Head of caudate nucleus (tissue), 42 donors: ENCODE measurements at regions of chr1 and their contacts with region 1.

Region 1: DNA sequence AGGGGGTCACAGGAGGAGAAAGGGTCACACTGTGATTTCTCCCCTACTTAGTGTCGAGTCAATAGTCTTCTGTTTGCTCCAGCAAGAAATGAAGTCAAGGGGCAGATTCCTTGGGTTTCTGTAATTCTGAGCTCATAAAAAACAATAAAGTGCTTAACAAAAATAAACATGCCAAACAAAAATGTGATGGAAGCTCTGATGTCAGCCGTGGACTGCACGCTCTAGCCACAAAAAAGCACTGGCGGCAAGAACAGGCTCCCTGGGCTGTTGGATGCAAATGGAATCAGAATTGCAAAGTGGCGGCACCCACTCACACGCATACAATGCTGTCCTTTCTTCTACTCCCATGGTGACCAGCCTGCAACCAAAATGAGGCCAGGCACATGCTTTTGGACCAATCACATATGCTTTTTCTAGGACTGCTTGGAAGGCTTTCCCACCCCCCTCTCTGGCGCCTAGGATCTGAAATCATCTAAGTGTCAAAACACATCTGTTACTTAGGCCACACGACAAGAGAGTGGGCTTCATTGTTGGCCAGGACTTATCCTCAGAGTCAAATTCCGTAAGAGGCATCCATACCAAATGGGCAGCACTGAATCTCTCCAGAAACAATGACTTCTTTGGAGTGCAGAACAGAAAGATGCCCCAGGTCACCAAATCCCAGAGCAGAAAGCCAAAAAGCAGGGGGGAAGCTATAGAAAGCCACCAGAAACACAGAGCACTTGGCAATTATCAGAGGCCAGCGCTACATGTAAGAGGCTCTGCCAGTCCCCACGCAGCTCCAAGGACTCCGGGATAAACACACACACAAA is 9.2 kb downstream of the C1orf198 start:
- DNase-seq: peak; percentile 61 to 95 (median 86)

Region 2: GRCh38 chr1:230807029-230807428 is 52.1 kb before region 1 on chr1:
- intact Hi-C with region 1: loop called (anchors 2 kb)
- DNase-seq: peak; percentile 86 to 100 (median 96)

Region 3: GRCh38 chr1:230957580-230957989 is 98.5 kb after region 1 on chr1:
- intact Hi-C with region 1: no loop called
- DNase-seq: no peak